ENCODE measurements at regions of chr9 and their contacts with region 1.

Region 1: GRCh38 chr9:113564498-113565237 is 101.1 kb downstream of the RGS3 start:
- DNase-seq: peak; percentile 41 to 73 (median 52)
- H3K4me3 ChIP-seq: peak overlapping the region; percentile 23 to 71 (median 52)
- H3K27ac ChIP-seq: peak overlapping the region in 58 of 59 donors; percentile 45 to 93 (median 85)
- H3K27me3 ChIP-seq: no peaks in the 10 kb centered on the region
- CTCF ChIP-seq: peak in 2 of 56 donors; percentile 4 to 14

Region 2: GRCh38 chr9:113536483-113537228 is 28.0 kb before region 1 on chr9:
- intact Hi-C with region 1: loop called in 1 of 2 experiments (anchors 1 kb)
- DNase-seq: peak; percentile 37 to 98 (median 94)
- H3K4me3 ChIP-seq: peak overlapping the region; percentile 10 to 80 (median 54)
- H3K27ac ChIP-seq: peak overlapping the region; percentile 71 to 99 (median 95)
- H3K27me3 ChIP-seq: no peaks in the 10 kb centered on the region
- CTCF ChIP-seq: peak in 11 of 56 donors; percentile 4 to 47 (median 22)

Region 3: GRCh38 chr9:113581865-113582697 is 17.4 kb after region 1 on chr9:
- intact Hi-C with region 1: loop called in 1 of 2 experiments (anchors 2 kb)
- DNase-seq: peak in 9 of 10 donors; percentile 71 to 89 (median 86)
- H3K4me3 ChIP-seq: peak overlapping the region in 24 of 59 donors; percentile 2 to 31 (median 16)
- H3K27ac ChIP-seq: peak overlapping the region in 58 of 59 donors; percentile 48 to 95 (median 89)
- H3K27me3 ChIP-seq: no peaks in the 10 kb centered on the region
- CTCF ChIP-seq: peak in 55 of 56 donors; percentile 37 to 85 (median 59)